Heart right ventricle (tissue), 16 donors: ENCODE measurements at regions of chr13 and their contacts with region 1.

Region 1: GRCh38 chr13:40371531-40372125 is 294.8 kb downstream of the FOXO1 start:
- DNase-seq: no peak
- ATAC-seq: no peak
- H3K4me3 ChIP-seq: no peak overlapping the region
- H3K27ac ChIP-seq: no peak overlapping the region
- H3K4me1 ChIP-seq: peaks cover 0 to 16% (median 6%) of the 10 kb centered on the region in 9 donors
- H3K27me3 ChIP-seq: no peaks in the 10 kb centered on the region
- CTCF ChIP-seq: no peak

Region 2: GRCh38 chr13:40087091-40088002 is 284.3 kb before region 1 on chr13:
- intact Hi-C with region 1: no loop called
- DNase-seq: no peak
- ATAC-seq: no peak
- H3K4me3 ChIP-seq: no peak overlapping the region
- H3K27ac ChIP-seq: no peak overlapping the region
- H3K4me1 ChIP-seq: no peaks in the 10 kb centered on the region
- H3K27me3 ChIP-seq: no peaks in the 10 kb centered on the region
- CTCF ChIP-seq: no peak

Region 3: DNA sequence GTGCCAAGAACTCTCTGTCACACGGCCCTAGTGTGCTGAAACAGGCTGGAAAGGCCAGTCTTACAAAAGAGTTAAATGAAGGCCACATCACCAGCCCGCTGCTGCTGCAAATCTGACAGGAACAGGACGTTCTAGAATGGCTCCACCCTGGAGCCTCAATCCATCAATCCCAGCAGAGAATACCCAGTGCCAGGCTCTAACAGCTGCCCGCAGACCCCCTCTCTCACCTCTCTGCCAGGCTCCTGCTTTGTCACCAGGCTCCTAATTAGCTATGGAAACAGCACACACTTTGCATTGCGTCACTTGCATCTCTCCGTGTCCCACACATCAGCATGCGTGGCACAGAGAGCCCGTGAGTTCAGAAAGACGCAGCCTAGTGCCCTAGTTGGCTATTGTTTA is 19.2 kb before region 1 on chr13:
- intact Hi-C with region 1: loop called in 1 of 10 experiments (anchors 2 kb)
- DNase-seq: peak in 1 of 2 donors; percentile 18
- ATAC-seq: peak; percentile 28 to 91 (median 66)
- H3K4me3 ChIP-seq: no peak overlapping the region
- H3K27ac ChIP-seq: peak overlapping the region in 7 of 10 donors; percentile 19 to 61 (median 43)
- H3K4me1 ChIP-seq: peaks cover 0 to 24% (median 12%) of the 10 kb centered on the region in 9 donors
- H3K27me3 ChIP-seq: no peaks in the 10 kb centered on the region
- CTCF ChIP-seq: no peak